Activated CD8-positive, alpha-beta T cell treated with anti-CD3 and anti-CD28 coated beads, Interleukin-2, amount 10 ng/mL, durations not matched to agents 7 days and 5 days (primary cell): ENCODE measurements at regions of chr15 and their contacts with region 1.

Region 1: DNA sequence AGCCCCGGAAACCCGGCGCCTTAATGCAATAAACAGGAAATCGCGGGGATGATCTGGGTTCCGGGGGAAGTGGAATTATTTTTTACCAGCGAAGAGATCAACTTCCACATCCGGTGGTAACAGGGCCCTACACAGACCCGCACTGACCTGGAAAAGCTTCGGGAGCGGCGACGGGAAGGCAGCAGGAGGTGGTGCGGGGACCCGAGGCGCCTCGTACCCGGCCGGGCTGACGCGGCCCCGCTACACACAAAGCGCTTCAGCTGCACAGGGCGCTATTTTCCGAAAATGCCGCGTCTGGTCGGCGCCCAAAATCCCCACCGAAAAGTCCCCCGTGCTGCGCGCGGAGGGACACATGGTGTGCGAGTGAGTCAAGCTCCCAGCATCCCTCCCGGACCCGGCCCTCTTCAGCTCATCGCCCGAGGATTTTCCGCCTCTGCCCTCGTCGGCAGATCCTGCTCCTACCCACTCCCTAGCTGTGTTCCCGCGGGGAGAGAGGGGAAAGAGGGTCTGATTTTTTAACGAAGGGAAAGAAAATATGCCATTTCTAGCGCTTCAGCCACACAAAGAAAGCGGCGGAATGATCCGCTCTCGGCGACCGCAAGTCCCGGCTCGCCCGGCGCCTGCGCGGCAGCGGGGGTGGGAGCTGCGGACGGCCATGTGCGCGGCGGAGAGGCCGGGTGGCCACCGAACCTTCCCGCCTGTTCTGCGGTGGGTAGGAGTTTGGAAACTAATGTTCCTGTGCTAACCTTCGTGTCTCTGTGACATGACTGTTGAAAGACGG is at the start of gene GABPB1:
- DNase-seq: peak; percentile 91
- ATAC-seq: peak; percentile 59
- H3K4me3 Mint-ChIP-seq: peak within 1 kb of the TSS; percentile 85
- H3K27ac Mint-ChIP-seq: peak within 1 kb of the TSS; percentile 98
- H3K4me1 Mint-ChIP-seq: peaks cover 36% of the 10 kb centered on the region
- H3K27me3 Mint-ChIP-seq: no peaks in the 10 kb centered on the region
- total RNA-seq, gene GABPB1: 33.5 to 35.2 TPM

Region 2: DNA sequence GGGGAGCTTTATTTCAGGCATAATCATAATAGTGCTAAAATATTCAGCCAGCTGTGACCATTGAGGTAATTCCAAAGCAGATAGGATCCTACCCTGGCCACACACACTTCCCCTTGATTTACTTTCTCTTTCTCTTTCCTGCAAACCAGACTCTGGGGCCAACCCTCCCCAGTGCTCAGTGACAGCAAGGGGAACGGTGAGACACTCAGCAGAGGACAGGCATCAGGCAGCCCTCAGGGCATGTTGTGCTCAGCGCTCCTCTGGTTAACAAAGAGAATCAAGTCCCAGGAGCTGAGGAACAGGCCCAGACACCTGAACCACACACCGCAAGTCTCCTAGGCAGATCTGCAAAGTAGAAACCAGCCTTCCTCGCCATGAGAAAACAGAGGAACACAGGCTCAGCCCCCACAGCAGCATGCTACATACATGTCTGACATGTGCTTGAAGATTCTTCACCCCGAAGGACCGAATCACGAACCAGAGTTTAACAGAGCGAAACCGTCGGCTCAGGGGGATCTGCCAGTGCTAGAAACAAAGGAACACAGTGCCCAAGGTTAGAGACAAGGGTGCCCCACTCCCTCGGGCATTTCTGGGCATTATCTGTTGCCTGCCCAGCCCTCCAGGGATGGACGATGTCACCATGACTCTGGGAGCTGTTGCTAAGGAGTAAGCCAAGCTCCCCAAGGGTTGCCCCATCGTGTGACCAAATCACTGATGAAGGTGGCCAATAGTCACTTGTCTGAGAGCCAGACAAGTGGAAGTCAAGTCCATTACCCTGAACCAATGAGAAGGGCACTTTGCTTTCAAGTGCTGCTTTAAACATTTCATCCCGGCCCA is 107.0 kb before region 1 on chr15:
- CTCF ChIA-PET with region 1: no interaction called
- POLR2A ChIA-PET with region 1: interaction called, 11 read pairs
- DNase-seq: peak; percentile 84
- ATAC-seq: peak; percentile 100
- H3K4me3 Mint-ChIP-seq: peak overlapping the region; percentile 62
- H3K27ac Mint-ChIP-seq: peak overlapping the region; percentile 94
- H3K4me1 Mint-ChIP-seq: peaks cover 46% of the 10 kb centered on the region
- H3K27me3 Mint-ChIP-seq: no peaks in the 10 kb centered on the region

Region 3: DNA sequence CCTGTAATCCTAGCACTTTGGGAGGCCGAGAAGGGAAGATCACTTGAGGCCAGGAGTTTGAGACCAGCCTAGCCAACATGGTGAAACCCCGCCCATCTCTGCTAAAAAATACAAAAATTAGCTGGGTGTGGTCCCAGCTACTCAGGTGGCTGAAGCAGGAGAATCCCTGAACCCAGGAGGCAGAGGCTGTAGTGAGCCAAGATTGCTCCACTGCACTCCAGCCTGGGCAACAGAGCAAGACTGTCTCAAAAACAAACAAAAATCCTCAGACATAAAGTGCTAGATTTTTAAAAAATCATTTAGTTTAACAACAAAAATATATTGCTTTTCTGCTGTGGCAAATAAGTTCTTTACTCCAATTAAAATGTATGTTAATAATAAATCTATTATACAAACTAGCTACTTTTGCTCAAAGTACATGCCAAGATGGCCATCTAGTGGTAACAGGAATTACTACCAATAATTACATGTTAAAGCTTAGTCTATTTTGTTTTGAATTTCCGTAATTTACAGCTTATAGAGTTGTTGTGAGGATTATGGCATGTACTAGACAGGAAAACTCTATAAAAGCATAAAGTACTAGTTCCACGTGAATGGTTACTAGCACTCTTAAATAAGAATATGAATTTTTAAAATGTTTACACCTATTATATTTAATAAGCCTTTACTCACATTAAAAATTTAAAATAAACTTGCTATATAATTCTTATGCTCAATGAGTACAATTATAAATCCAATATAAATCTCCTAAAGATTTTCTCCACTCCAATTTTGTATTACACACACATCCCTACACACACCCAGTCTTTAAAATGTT is 39.0 kb before region 1 on chr15:
- CTCF ChIA-PET with region 1: interaction called, 8 read pairs
- POLR2A ChIA-PET with region 1: interaction called, 10 read pairs
- DNase-seq: no peak
- ATAC-seq: peak; percentile 51
- H3K4me3 Mint-ChIP-seq: no peak overlapping the region
- H3K27ac Mint-ChIP-seq: no peak overlapping the region
- H3K4me1 Mint-ChIP-seq: peaks cover 17% of the 10 kb centered on the region
- H3K27me3 Mint-ChIP-seq: no peaks in the 10 kb centered on the region

Region 4: DNA sequence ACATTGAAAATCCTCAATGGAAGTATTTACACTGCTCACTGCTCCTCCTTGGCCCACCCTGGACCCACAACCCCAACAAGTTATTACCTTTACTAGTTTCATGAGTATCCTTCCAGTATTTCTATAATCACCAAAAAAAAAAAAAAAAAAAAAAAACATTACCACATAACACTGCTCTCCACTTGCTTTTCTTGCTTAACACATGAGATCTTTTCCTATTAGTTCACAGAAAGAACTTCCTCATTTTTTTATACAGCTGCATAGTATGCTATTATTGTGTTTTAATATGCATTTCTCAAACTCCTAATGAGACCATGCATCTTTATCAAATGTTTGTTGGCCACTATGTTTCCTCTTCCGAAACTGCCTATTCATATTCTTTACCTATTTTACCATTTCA is 14.6 kb before region 1 on chr15:
- CTCF ChIA-PET with region 1: interaction called, 22 read pairs
- POLR2A ChIA-PET with region 1: interaction called, 23 read pairs
- DNase-seq: no peak
- ATAC-seq: no peak
- H3K4me3 Mint-ChIP-seq: no peak overlapping the region
- H3K27ac Mint-ChIP-seq: no peak overlapping the region
- H3K4me1 Mint-ChIP-seq: peaks cover 6% of the 10 kb centered on the region
- H3K27me3 Mint-ChIP-seq: no peaks in the 10 kb centered on the region

Region 5: DNA sequence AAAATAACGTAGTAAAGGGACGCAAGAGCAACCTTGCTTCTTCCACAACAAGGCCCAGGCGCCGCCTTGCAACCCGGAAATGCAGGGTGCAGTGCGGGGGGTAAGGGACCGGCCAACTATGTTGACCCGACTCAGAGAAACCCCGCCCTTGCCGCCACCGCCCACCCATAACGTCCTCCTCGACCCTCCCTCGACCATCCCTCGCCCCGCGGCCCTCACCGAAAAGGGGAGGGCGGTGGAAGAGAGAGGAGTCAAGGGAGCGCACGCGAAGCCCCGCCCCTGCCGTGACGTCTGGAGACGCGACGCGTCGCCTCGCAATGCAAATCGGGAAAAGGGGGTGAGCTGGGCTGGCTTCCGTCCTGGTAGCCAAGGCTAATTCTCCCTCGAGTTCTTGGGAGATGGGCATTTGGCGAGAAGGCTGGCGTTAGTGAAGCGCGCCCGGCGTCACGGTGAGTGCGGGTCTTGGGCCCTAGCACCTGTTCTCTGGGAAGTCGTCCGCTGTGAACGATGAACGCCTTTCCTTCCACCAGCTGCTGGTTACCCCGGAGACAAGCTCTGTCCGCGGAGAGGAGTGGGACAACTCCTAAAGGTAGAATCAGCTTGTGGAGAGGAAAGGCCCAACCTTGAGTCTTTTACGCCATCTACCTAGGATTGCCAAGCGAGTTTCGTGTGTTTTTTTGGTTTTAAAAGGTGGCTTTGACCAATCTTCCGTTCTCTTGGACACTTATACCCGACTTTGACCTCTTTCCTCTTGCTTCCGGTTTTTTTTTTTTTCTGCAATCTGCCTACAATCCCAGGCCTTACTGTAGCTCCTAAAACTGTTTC is 69.2 kb after region 1 on chr15 and contains the start of gene USP8:
- CTCF ChIA-PET with region 1: interaction called, 4 read pairs
- POLR2A ChIA-PET with region 1: interaction called, 60 read pairs
- DNase-seq: peak; percentile 96
- ATAC-seq: peak; percentile 96
- H3K4me3 Mint-ChIP-seq: peak within 1 kb of the TSS; percentile 94
- H3K27ac Mint-ChIP-seq: peak within 1 kb of the TSS; percentile 94
- H3K4me1 Mint-ChIP-seq: peaks cover 31% of the 10 kb centered on the region
- H3K27me3 Mint-ChIP-seq: no peaks in the 10 kb centered on the region
- total RNA-seq, gene USP8: 55.6 to 58.8 TPM

Region 6: DNA sequence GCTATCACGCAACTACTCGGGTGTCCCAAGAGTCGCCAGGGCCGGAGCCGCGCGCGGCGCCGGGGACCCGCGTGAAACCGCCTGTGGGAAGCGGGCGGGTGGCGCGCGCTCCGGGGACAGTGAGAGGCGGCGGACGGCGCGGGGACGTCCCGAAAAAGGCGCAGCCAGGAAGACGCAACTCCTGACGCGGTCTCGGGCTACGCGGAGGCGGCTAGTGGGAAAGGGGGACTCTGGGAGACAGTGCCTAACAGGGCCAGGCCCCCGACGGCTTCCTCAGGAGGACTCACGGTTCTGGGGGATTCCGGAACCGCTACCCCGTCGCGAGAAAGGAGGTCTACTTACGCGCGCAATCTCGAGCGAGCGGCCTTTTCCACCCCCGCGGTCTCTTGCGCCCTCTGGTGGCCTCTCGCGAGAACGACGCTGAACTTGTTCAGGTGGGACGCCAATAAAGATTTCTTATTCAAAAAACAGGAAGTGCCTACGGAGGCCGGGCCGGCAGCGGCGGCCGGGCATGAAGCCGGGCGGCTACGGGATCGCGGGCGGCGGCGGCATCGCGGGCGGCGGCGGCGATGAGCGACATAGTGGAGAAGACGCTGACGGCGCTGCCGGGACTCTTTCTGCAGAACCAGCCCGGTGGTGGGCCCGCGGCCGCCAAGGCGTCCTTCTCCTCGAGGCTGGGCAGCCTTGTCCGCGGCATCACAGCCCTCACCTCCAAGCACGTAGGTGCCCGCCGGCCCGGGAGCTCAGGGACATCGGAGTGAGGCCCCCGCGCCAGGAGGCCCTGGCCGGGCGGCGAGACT is 553.4 kb after region 1 on chr15 and contains the start of gene AP4E1:
- CTCF ChIA-PET with region 1: interaction called, 4 read pairs
- POLR2A ChIA-PET with region 1: interaction called, 19 read pairs
- DNase-seq: peak; percentile 96
- ATAC-seq: peak; percentile 64
- H3K4me3 Mint-ChIP-seq: peak within 1 kb of the TSS; percentile 87
- H3K27ac Mint-ChIP-seq: peak within 1 kb of the TSS; percentile 98
- H3K4me1 Mint-ChIP-seq: peaks cover 22% of the 10 kb centered on the region
- H3K27me3 Mint-ChIP-seq: no peaks in the 10 kb centered on the region
- total RNA-seq, gene AP4E1: 15.9 to 20.0 TPM